Right ventricle myocardium inferior (tissue), 1 donor: ENCODE measurements at regions of chr12 and their contacts with region 1.

Region 1: GRCh38 chr12:70733385-70733784 is 96.2 kb upstream of the PTPRB start:
- DNase-seq: no peak
- ATAC-seq: peak; percentile 54

Region 2: GRCh38 chr12:69900720-69901131 is 832.7 kb before region 1 on chr12:
- intact Hi-C with region 1: loop called (anchors 2 kb)
- DNase-seq: no peak
- ATAC-seq: peak; percentile 46

Region 3: DNA sequence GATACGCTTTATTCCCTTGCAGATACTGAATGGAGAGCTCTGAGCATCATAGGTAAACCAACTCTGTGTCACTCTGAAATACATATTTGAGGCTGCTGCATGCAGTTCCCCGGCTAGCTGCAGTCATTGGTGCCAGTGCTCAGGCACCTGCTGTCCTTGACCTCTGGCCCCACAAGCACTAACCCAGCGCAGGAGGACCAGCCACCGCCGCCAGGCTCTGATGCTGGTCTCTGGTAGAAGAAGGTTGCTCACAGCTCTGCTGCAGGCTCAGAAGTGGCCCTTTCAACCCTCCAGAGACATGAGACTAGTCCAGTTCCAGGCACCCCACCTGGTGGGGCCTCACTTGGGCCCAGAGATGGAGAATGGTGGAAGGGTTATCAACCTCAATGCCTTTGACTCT is 61.7 kb before region 1 on chr12:
- intact Hi-C with region 1: no loop called
- DNase-seq: no peak
- ATAC-seq: no peak

Region 4: DNA sequence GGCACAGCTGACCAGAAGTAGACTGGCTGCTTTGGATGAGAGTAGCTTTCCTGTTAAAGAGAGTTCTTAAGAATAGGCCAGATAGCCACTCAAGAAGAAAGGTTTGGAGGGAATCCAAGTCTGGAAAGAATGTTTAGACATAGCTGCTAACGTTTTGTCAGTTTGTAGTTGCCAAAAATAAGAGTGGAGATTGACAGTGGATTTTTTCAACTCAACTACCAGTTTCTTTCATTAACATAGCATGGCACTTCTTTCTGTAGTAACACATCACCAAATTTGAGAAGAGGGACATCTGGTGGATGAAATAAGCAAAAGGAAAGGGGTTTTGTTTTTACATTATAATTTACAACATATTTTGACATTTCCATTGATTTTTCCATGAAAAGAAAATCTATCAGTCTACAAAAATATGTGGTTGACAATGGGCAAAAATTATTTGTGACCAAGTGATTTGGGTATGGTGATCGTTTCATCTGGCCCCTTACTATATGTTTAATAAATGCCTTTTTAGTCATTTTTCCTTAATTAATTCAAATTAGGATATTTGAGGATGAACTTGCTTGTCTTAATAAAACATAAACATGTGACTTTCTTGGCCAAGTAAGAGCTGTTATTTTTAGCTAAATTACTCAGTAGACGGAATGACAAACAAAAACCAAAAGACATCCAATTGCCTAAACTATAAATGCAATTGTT is 116.0 kb after region 1 on chr12:
- intact Hi-C with region 1: loop called (anchors 2 kb)
- DNase-seq: no peak
- ATAC-seq: no peak

Region 5: GRCh38 chr12:71014180-71014785 is 280.9 kb after region 1 on chr12:
- intact Hi-C with region 1: loop called (anchors 10 kb)
- DNase-seq: no peak
- ATAC-seq: peak; percentile 62